ENCODE measurements at regions of chr10 and their contacts with region 1.

Region 1: GRCh38 chr10:73899423-73899822 is 11.5 kb upstream of the PLAU start:
- DNase-seq: no peak
- ATAC-seq: no peak
- H3K4me3 ChIP-seq: no peak overlapping the region
- H3K4me3 Mint-ChIP-seq: no peak overlapping the region
- H3K27ac ChIP-seq: no peak overlapping the region
- H3K27ac Mint-ChIP-seq: no peak overlapping the region
- H3K4me1 ChIP-seq: no peaks in the 10 kb centered on the region
- H3K4me1 Mint-ChIP-seq: peaks cover 0 to 3% (median 0%) of the 10 kb centered on the region in 3 donors
- H3K27me3 ChIP-seq: peaks cover 0 to 7% of the 10 kb centered on the region in 2 experiments
- H3K27me3 Mint-ChIP-seq: peaks cover 0 to 7% of the 10 kb centered on the region in 2 donors

Region 2: GRCh38 chr10:73911553-73912004 is 12.2 kb after region 1 on chr10:
- CTCF ChIA-PET with region 1: no interaction called
- POLR2A ChIA-PET with region 1: interaction called in 1 of 2 experiments, 16 read pairs
- DNase-seq: peak in 1 of 35 experiments; percentile 19
- ATAC-seq: no peak
- H3K4me3 ChIP-seq: peak overlapping the region; percentile 35 to 52
- H3K4me3 Mint-ChIP-seq: peak overlapping the region; percentile 84 to 86 (median 85)
- H3K27ac ChIP-seq: no peak overlapping the region
- H3K27ac Mint-ChIP-seq: no peak overlapping the region
- H3K4me1 ChIP-seq: peaks cover 0 to 38% of the 10 kb centered on the region in 2 experiments
- H3K4me1 Mint-ChIP-seq: peaks cover 29 to 37% (median 34%) of the 10 kb centered on the region in 3 donors
- H3K27me3 ChIP-seq: peaks cover 0 to 79% of the 10 kb centered on the region in 2 experiments
- H3K27me3 Mint-ChIP-seq: peaks cover 53 to 59% of the 10 kb centered on the region in 2 donors

Region 3: GRCh38 chr10:74176380-74177139 is 277.1 kb after region 1 on chr10:
- CTCF ChIA-PET with region 1: no interaction called
- POLR2A ChIA-PET with region 1: no interaction called
- DNase-seq: peak; percentile 90 to 99 (median 96)
- ATAC-seq: peak; percentile 93 to 96 (median 95)
- H3K4me3 ChIP-seq: peak overlapping the region; percentile 94 to 96
- H3K4me3 Mint-ChIP-seq: peak overlapping the region; percentile 88 to 94 (median 93)
- H3K27ac ChIP-seq: peak overlapping the region; percentile 89
- H3K27ac Mint-ChIP-seq: peak overlapping the region; percentile 96 to 98
- H3K4me1 ChIP-seq: peaks cover 7 to 18% of the 10 kb centered on the region in 2 experiments
- H3K4me1 Mint-ChIP-seq: peaks cover 35 to 44% (median 43%) of the 10 kb centered on the region in 3 donors
- H3K27me3 ChIP-seq: no peaks in the 10 kb centered on the region
- H3K27me3 Mint-ChIP-seq: no peaks in the 10 kb centered on the region